ENCODE measurements at regions of chr17 and their contacts with region 1.

Region 1: DNA sequence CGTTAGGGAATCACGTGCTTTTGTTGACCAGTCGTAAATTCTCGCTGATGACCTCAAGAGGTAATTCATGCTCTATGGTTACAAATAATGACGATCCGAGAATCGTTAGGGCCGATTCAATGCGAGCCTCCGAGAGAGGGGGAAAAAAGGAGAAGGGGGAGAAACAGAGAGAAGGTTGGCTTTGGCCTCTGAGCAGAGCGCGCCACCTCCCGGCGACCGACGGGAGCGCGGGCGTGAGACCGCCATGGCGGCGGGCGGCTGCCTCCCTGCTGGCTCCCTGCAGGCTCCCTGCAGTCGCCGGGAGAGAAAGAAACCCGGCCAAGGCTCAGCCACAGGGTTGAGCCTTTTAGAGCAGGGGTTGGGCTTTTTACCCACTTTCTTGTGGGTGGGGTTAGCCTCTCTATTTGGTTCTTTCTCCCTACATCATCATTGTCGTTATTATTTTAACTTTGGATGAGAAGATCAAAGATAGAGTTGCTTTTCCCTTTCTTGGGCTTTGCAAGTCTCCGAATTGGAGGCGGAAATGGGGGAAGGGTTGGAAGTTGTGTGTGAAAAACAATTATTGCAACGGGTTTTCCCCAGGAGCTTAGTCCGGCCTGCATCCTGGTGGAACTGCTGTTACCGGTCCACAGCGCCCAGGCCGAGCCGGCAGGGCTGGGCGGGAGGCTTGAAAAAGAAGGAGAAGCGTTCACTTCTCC is 410 bp upstream of the HOXB5 start:
- DNase-seq: peak; percentile 90
- ATAC-seq: peak; percentile 67
- H3K4me3 Mint-ChIP-seq: peak overlapping the region; percentile 67
- H3K27ac Mint-ChIP-seq: no peak overlapping the region
- H3K4me1 Mint-ChIP-seq: peaks cover 40% of the 10 kb centered on the region
- H3K27me3 Mint-ChIP-seq: peaks cover 80% of the 10 kb centered on the region

Region 2: GRCh38 chr17:47368262-47368661 is 1225.7 kb before region 1 on chr17:
- CTCF ChIA-PET with region 1: no interaction called
- POLR2A ChIA-PET with region 1: no interaction called
- intact Hi-C with region 1: no loop called
- DNase-seq: no peak
- ATAC-seq: no peak
- H3K4me3 Mint-ChIP-seq: no peak overlapping the region
- H3K27ac Mint-ChIP-seq: no peak overlapping the region
- H3K4me1 Mint-ChIP-seq: no peaks in the 10 kb centered on the region
- H3K27me3 Mint-ChIP-seq: no peaks in the 10 kb centered on the region

Region 3: DNA sequence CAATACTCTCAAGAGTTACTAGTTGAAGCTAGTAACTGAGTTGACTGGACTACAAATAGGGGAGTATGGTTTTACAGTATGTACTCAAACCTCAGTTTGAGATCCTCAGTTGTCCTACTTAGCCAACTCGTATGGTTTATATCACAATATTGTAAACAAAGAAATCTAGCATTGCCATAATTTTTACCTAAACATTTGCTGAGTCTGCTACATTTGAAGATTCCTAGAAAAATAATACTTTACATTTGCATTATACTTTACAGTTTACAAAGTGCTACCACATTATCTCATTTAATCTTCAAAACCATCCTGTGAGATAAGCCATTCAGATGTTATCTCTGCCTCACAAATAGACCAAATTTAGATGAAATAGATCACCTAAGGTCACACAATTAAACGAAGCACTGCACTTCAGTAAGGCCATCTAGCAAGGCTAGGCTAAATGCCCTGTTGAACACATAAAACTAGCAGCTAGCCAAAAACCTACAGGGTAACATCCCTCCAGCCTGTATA is 509.0 kb before region 1 on chr17:
- CTCF ChIA-PET with region 1: interaction called, 7 read pairs
- POLR2A ChIA-PET with region 1: no interaction called
- intact Hi-C with region 1: loop called in 1 of 2 experiments (anchors 5 kb)
- DNase-seq: no peak
- ATAC-seq: no peak
- H3K4me3 Mint-ChIP-seq: no peak overlapping the region
- H3K27ac Mint-ChIP-seq: no peak overlapping the region
- H3K4me1 Mint-ChIP-seq: peaks cover 7% of the 10 kb centered on the region
- H3K27me3 Mint-ChIP-seq: no peaks in the 10 kb centered on the region

Region 4: GRCh38 chr17:48153691-48154358 is 440.2 kb before region 1 on chr17:
- CTCF ChIA-PET with region 1: interaction called, 3 read pairs
- POLR2A ChIA-PET with region 1: no interaction called
- intact Hi-C with region 1: loop called (anchors 5 to 10 kb)
- DNase-seq: peak; percentile 30
- ATAC-seq: no peak
- H3K4me3 Mint-ChIP-seq: no peak overlapping the region
- H3K27ac Mint-ChIP-seq: no peak overlapping the region
- H3K4me1 Mint-ChIP-seq: no peaks in the 10 kb centered on the region
- H3K27me3 Mint-ChIP-seq: no peaks in the 10 kb centered on the region

Region 5: DNA sequence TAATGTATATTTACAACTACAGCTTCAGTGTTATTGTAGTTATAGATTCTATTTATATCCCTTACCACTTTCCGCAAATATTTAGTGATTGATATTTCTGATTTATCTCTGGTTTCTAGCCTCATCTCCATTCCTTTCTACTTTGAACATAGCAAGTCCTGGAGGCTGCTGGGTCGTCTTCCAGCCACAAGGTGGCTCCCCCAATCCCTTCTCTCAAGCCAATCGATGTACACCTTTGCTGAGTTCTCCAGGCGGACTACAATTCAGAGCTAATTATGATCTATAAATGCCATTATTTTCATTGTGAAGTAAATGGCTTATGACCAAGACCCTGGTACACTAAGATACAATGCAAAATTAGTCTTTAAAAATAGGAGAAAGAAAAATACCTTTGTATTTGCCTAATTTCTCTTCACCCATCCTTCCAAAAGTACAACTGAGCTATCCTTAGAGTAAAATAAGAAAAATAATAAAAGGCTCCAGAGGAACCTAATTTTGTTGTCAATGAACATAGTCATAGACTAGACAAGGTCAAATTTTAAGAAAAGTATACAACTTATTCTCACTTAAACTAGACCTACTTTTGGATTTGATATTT is 286.1 kb before region 1 on chr17:
- CTCF ChIA-PET with region 1: interaction called, 20 read pairs
- POLR2A ChIA-PET with region 1: no interaction called
- intact Hi-C with region 1: no loop called
- DNase-seq: peak; percentile 69
- ATAC-seq: peak; percentile 75
- H3K4me3 Mint-ChIP-seq: no peak overlapping the region
- H3K27ac Mint-ChIP-seq: no peak overlapping the region
- H3K4me1 Mint-ChIP-seq: peaks cover 15% of the 10 kb centered on the region
- H3K27me3 Mint-ChIP-seq: no peaks in the 10 kb centered on the region

Region 6: DNA sequence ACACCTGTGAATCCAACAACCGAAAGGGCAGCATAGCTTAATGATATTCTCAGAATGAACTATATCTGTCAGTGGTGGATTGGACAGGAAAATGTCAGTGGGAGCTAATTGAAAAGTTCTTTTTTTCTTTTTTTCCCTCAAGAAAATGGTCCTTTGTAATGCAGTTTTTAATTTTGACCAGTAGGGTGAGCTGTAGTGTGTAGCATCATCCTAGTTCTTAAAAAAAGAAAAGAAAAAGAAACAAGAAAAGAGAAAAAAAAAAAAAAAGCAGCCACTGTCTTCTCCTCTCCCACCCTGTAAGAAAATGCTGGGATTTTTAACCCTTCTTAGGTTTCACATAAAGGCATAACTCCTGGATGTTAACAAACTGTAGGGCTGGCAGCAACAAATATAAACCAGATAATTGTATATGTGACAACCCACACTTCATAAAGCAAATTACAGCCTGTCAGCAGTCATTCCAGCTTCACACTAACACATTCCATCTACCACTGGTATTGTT is 242.1 kb before region 1 on chr17:
- CTCF ChIA-PET with region 1: interaction called, 38 read pairs
- POLR2A ChIA-PET with region 1: interaction called, 3 read pairs
- intact Hi-C with region 1: no loop called
- DNase-seq: no peak
- ATAC-seq: no peak
- H3K4me3 Mint-ChIP-seq: no peak overlapping the region
- H3K27ac Mint-ChIP-seq: no peak overlapping the region
- H3K4me1 Mint-ChIP-seq: peaks cover 11% of the 10 kb centered on the region
- H3K27me3 Mint-ChIP-seq: no peaks in the 10 kb centered on the region

Region 7: GRCh38 chr17:48610282-48611211 is 16.6 kb after region 1 on chr17 and contains the start of gene HOXB7:
- CTCF ChIA-PET with region 1: interaction called, 27 read pairs
- POLR2A ChIA-PET with region 1: interaction called, 3 read pairs
- intact Hi-C with region 1: loop called in 1 of 2 experiments (anchors 2 kb)
- DNase-seq: peak; percentile 83
- ATAC-seq: peak; percentile 40
- H3K4me3 Mint-ChIP-seq: peak within 1 kb of the TSS; percentile 82
- H3K27ac Mint-ChIP-seq: peak within 1 kb of the TSS; percentile 58
- H3K4me1 Mint-ChIP-seq: peaks cover 37% of the 10 kb centered on the region
- H3K27me3 Mint-ChIP-seq: peaks cover 63% of the 10 kb centered on the region
- total RNA-seq, gene HOXB7: 0.25 to 0.30 TPM

Region 8: GRCh38 chr17:48690655-48691054 is 96.7 kb after region 1 on chr17:
- CTCF ChIA-PET with region 1: no interaction called
- POLR2A ChIA-PET with region 1: no interaction called
- intact Hi-C with region 1: no loop called
- DNase-seq: no peak
- ATAC-seq: no peak
- H3K4me3 Mint-ChIP-seq: no peak overlapping the region
- H3K27ac Mint-ChIP-seq: no peak overlapping the region
- H3K4me1 Mint-ChIP-seq: no peaks in the 10 kb centered on the region
- H3K27me3 Mint-ChIP-seq: peaks cover 10% of the 10 kb centered on the region

Region 9: GRCh38 chr17:48908047-48908843 is 314.3 kb after region 1 on chr17 and contains the start of gene UBE2Z:
- CTCF ChIA-PET with region 1: no interaction called
- POLR2A ChIA-PET with region 1: no interaction called
- intact Hi-C with region 1: no loop called
- DNase-seq: peak; percentile 94
- ATAC-seq: peak; percentile 86
- H3K4me3 Mint-ChIP-seq: peak within 1 kb of the TSS; percentile 89
- H3K27ac Mint-ChIP-seq: peak within 1 kb of the TSS; percentile 97
- H3K4me1 Mint-ChIP-seq: peaks cover 46% of the 10 kb centered on the region
- H3K27me3 Mint-ChIP-seq: no peaks in the 10 kb centered on the region
- total RNA-seq, gene UBE2Z: 104 TPM

Measured in activated CD4-positive, alpha-beta T cell treated with anti-CD3 and anti-CD28 coated beads for 36 hours (primary cell).